Caco-2 (cell line): ENCODE measurements at regions of chr11 and their contacts with region 1.

Region 1: GRCh38 chr11:2298795-2299761 is 2.6 kb downstream of the C11orf21 start:
- DNase-seq: peak; percentile 85 to 89
- H3K4me3 ChIP-seq: no peak overlapping the region
- H3K4me3 Mint-ChIP-seq: no peak overlapping the region
- H3K27ac Mint-ChIP-seq: peak overlapping the region; percentile 60
- H3K4me1 ChIP-seq: peaks cover 37% of the 10 kb centered on the region
- H3K4me1 Mint-ChIP-seq: peaks cover 7% of the 10 kb centered on the region
- H3K27me3 ChIP-seq: no peaks in the 10 kb centered on the region
- H3K27me3 Mint-ChIP-seq: no peaks in the 10 kb centered on the region
- CTCF ChIP-seq: peak; percentile 35 to 85

Region 2: DNA sequence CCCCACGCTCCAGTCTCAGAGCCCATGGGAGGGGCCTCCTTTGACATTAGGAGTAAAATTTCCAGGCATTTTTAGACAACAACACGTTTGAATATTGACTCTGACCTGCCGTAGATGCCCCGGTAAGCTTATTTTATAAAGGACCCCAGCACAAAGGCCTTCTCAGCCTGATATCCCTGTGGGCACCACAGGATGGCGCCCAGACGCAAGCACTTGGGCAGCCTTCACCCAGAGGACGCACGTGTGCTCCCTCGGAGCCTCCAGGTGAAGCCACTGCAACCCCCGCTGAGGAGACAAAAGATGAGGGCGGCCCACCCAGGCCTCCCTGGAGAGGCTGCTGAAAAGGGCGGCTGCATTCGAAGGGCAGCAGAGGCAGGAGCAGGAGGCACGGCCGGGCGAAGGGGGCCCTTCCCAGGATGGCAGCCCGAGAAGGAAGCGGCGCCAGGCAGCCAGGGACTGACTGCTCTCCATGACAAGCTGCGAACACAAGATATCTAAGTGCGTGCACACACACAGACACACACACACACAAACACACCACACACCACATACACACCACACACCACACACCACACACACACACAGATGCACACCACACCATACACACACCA is 112.3 kb before region 1 on chr11:
- CTCF ChIA-PET with region 1: interaction called, 10 read pairs
- POLR2A ChIA-PET with region 1: no interaction called
- intact Hi-C with region 1: loop called (anchors 2 kb)
- DNase-seq: peak in 1 of 2 experiments; percentile 71
- H3K4me3 ChIP-seq: no peak overlapping the region
- H3K4me3 Mint-ChIP-seq: no peak overlapping the region
- H3K27ac Mint-ChIP-seq: no peak overlapping the region
- H3K4me1 ChIP-seq: peaks cover 10% of the 10 kb centered on the region; the same call in 1 of the 2 replicates
- H3K4me1 Mint-ChIP-seq: no peaks in the 10 kb centered on the region
- H3K27me3 ChIP-seq: no peaks in the 10 kb centered on the region
- H3K27me3 Mint-ChIP-seq: no peaks in the 10 kb centered on the region
- CTCF ChIP-seq: peak; percentile 69 to 82

Region 3: GRCh38 chr11:2202055-2202899 is 96.8 kb before region 1 on chr11:
- CTCF ChIA-PET with region 1: interaction called, 46 read pairs
- POLR2A ChIA-PET with region 1: interaction called, 4 read pairs
- intact Hi-C with region 1: loop called (anchors 1 kb)
- DNase-seq: peak; percentile 100
- H3K4me3 ChIP-seq: peak overlapping the region; percentile 32
- H3K4me3 Mint-ChIP-seq: peak overlapping the region; percentile 74
- H3K27ac Mint-ChIP-seq: peak overlapping the region; percentile 73
- H3K4me1 ChIP-seq: peaks cover 69% of the 10 kb centered on the region
- H3K4me1 Mint-ChIP-seq: peaks cover 49% of the 10 kb centered on the region
- H3K27me3 ChIP-seq: no peaks in the 10 kb centered on the region
- H3K27me3 Mint-ChIP-seq: no peaks in the 10 kb centered on the region
- CTCF ChIP-seq: no peak

Region 4: GRCh38 chr11:2214527-2215229 is 84.4 kb before region 1 on chr11:
- CTCF ChIA-PET with region 1: interaction called, 11 read pairs
- POLR2A ChIA-PET with region 1: no interaction called
- intact Hi-C with region 1: loop called (anchors 5 kb)
- DNase-seq: peak in 1 of 2 experiments; percentile 73
- H3K4me3 ChIP-seq: no peak overlapping the region
- H3K4me3 Mint-ChIP-seq: no peak overlapping the region
- H3K27ac Mint-ChIP-seq: peak overlapping the region; percentile 75
- H3K4me1 ChIP-seq: peaks cover 86% of the 10 kb centered on the region
- H3K4me1 Mint-ChIP-seq: peaks cover 39% of the 10 kb centered on the region
- H3K27me3 ChIP-seq: no peaks in the 10 kb centered on the region
- H3K27me3 Mint-ChIP-seq: no peaks in the 10 kb centered on the region
- CTCF ChIP-seq: no peak

Region 5: DNA sequence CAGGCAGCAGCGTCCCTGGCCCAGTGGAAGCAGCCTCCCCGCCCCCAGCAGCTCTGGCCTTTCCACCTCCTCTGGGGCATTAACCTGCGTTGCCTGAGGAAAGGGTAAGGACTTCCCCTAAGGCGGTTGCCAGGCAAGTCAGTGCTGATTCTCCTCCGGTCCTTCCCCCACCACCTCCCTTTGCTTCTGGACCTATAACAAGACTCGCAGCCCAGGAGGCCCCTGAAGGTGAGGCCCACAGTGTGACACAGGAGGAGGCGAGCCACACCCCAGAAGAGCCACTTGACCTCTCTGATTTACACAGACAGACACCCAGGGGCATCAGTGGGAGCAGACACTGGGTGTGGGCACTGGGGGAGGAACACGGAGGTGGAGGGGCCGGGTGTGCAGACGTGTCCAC is 64.1 kb before region 1 on chr11:
- CTCF ChIA-PET with region 1: no interaction called
- POLR2A ChIA-PET with region 1: no interaction called
- intact Hi-C with region 1: no loop called
- DNase-seq: no peak
- H3K4me3 ChIP-seq: no peak overlapping the region
- H3K4me3 Mint-ChIP-seq: no peak overlapping the region
- H3K27ac Mint-ChIP-seq: no peak overlapping the region
- H3K4me1 ChIP-seq: no peaks in the 10 kb centered on the region
- H3K4me1 Mint-ChIP-seq: no peaks in the 10 kb centered on the region
- H3K27me3 ChIP-seq: no peaks in the 10 kb centered on the region
- H3K27me3 Mint-ChIP-seq: no peaks in the 10 kb centered on the region
- CTCF ChIP-seq: no peak

Region 6: DNA sequence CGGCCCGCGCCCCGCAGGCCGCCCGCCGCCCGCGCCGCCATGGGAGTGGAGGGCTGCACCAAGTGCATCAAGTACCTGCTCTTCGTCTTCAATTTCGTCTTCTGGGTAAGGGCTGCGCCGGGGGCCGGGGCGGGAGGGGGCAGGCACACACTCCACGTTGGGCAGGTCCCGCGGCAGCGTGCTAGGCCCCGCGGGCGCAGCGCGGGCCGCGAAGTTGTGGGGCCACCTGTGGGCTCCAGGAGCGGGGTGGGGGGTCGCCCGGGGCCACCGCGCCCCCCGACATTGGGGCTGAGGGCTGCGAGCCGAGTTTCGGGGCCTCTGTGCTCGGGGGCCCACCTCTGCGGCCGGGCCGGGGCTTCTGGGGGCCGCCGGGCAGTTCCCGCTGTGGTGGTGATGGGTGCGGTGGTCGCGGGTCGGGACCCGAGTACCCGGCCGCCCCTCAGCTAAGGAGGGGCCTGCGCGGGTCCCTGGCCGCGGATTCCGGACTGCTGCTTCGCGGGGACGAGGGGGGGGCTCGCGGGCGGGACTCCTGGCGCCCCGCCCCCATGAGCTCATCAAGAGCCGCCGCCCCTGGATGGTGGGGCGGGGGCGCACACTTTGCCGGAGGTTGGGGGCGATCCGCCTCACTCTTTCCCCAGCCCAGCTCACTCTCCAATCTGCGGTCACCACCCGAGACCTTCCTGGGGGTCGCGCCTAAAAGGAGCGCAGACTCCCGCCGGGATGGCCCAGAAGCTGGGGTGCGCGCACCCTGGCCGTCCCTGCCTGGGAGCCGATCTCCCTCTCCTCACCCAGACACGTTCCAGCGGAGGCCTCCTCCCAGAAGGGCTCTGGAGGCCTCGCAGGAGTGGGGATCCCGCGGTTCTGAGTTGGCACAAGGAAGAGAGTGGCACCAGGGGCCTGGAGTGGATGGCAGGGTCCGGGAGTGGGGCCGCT is 78.7 kb after region 1 on chr11:
- CTCF ChIA-PET with region 1: interaction called, 5 read pairs
- POLR2A ChIA-PET with region 1: interaction called, 18 read pairs
- intact Hi-C with region 1: no loop called
- DNase-seq: peak in 1 of 2 experiments; percentile 61
- H3K4me3 ChIP-seq: peak overlapping the region; percentile 72
- H3K4me3 Mint-ChIP-seq: peak overlapping the region; percentile 85
- H3K27ac Mint-ChIP-seq: peak overlapping the region; percentile 69
- H3K4me1 ChIP-seq: peaks cover 20% of the 10 kb centered on the region
- H3K4me1 Mint-ChIP-seq: peaks cover 7% of the 10 kb centered on the region
- H3K27me3 ChIP-seq: no peaks in the 10 kb centered on the region
- H3K27me3 Mint-ChIP-seq: no peaks in the 10 kb centered on the region
- CTCF ChIP-seq: no peak